Activated T-helper 2 cell treated with anti-CD3 and anti-CD28 coated beads, Interferon-gamma antibody, Interleukin-2, Interleukin-4, amounts not matched to agents 10 μg/mL and 5 μg/mL and 100 μg/mL, durations not matched to agents 14 hours and 24 hours and 36 hours (primary cell): ENCODE measurements at regions of chr17 and their contacts with region 1.

Region 1: GRCh38 chr17:40340880-40341807 is 23.4 kb downstream of the GJD3 start:
- DNase-seq: peak; percentile 82
- H3K4me3 Mint-ChIP-seq: peak overlapping the region; percentile 73
- H3K27ac Mint-ChIP-seq: peak overlapping the region; percentile 89
- H3K4me1 Mint-ChIP-seq: peaks cover 55% of the 10 kb centered on the region
- H3K27me3 Mint-ChIP-seq: no peaks in the 10 kb centered on the region

Region 2: DNA sequence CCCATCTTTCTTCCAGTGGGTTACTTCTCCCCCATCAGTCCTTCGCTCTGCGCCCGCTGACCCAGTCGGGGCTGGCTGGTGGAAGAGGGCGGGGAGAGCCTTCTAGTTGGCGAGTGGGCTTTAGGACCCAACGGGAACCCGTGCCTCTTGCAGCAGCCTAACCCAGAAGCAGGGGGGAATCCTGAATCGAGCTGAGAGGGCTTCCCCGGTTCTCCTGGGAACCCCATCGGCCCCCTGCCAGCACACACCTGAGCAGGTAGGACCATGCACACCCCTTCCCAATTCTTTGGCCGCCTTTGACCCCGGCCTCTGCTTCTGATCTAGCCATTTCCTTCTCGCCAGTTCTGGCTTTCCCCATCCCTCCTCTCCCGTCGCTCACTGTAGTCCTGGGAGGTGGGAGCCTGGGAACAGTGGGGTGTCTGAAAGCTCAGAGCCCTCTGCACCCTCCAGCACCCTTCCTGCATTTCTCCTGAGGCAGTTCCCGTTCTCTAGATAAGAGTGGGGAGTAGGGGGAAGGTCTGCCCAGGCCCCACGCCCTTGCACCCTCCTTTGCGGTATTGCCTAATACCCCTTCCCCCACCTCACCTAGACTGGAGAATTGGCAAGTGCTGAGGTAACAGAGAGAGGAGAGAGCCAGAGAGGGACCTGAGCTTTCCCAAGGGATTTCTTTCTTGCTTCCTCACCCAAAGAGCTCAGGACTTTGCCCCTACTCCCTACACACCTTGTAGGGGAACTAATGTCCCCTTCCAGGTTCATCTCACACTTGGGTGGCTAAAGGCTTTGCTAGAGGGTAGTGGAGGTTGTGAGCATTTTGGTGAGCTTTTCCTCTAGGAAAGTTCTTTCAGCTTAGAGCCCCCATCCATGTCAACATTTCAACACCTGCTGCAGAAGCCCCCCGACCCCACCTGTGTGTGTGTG is 31.9 kb before region 1 on chr17 and contains the start of gene RARA:
- intact Hi-C with region 1: loop called (anchors 5 kb)
- DNase-seq: no peak
- H3K4me3 Mint-ChIP-seq: no peak within 1 kb of the TSS
- H3K27ac Mint-ChIP-seq: no peak within 1 kb of the TSS
- H3K4me1 Mint-ChIP-seq: peaks cover 10% of the 10 kb centered on the region
- H3K27me3 Mint-ChIP-seq: no peaks in the 10 kb centered on the region
- total RNA-seq, gene RARA: 30.4 and 35.1 TPM in 2 replicates

Region 3: DNA sequence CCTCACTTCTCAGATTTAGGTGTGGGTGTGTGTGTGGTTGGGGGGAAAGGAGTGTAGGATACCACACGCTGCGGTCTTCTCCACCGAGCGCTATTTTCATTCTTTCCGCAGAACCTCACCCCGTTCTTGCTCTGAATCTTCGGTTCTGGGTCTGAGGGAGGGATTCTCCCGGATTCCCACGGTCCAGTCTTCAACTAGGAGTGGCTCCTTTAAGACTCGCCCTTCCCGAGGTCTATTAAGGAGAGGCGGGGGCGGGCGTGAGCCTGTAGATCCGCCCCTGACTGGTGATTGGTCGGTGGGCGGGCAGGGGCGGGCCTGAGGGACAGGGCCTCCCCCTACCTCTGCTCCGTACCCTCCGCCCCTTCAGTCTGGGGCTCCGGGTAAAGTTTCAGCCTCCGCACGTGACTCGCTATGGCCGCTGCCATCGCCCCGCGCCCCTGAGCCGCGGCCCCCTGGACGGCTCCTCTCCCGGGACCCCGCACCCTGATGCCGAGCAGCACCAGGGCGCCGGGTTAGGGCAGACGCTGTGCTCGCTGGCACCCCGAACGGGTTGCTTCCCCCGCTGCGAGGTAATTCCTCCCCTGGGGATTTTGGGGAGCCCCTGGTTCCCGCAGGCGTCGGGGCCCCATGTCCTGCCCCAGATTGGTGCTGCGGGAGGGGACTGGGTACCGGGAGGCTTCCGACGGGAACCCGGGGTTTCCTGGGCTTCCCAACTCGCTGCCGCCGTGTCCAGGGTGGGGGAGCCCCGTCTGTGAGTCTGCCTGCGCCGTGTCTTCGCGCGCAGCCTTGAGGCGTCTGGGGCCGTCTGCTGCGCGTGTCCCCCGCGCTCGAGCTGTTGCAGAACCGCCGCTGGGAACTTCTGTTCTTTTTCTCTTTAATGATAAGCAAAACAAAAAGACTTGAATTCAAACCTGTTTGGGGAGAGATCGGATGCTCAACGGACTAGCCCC is 23.0 kb before region 1 on chr17:
- intact Hi-C with region 1: loop called (anchors 2 kb)
- DNase-seq: peak; percentile 87
- H3K4me3 Mint-ChIP-seq: peak overlapping the region; percentile 92
- H3K27ac Mint-ChIP-seq: peak overlapping the region; percentile 81
- H3K4me1 Mint-ChIP-seq: peaks cover 58% of the 10 kb centered on the region
- H3K27me3 Mint-ChIP-seq: no peaks in the 10 kb centered on the region